HEK293T (cell line): ENCODE measurements at regions of chr10 and their contacts with region 1.

Region 1: DNA sequence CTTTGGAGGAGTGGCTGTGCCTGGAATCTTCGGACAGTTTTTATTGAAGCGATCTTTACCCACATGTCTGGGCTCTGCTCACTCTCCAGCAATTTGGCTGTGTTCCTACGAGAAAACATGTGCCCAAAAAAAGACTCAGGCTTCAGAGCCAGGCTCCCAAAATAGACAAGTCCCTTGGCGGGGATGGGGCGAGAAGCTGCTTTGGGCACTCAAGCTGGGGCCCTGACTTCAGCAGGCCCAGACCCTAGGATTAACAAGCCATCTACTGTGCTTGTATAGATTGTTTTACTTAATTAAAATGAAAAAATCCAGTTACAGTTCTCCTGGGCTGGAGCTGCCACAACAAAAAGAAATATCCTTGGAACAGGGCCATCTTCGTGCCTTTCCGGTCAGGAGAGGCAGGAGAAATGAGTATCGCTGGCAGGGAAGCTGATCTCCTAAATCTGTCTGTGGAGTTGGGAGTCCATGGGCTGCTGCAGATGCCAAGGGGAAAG is 51.4 kb upstream of the PDCD4 start:
- DNase-seq: no peak

Region 2: DNA sequence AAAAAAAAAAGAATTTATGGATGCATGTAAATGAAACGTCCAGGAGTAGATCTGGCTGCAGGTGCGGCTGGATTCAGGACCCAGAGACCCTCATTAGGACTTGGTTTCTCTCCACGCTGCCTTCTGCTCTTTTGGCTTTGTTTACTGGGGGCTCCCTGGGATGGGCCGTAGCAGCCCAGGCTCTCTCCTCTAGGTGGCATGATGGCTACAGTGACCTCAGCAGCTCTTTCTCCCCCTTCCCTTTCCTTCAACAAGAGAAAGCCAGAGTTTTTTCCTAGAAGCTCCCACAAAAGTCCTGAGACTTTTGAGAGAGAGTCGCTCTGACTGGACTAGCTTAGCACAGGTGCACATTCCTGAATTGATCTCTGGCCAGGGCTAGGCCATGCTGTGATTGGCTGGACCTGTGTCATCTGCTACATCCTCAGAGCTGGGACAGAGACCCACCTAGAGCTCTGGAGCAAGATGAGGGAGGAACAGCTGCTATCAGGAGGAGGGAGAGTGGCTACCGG is 16.5 kb before region 1 on chr10:
- CTCF ChIA-PET with region 1: no interaction called
- POLR2A ChIA-PET with region 1: no interaction called
- DNase-seq: peak; percentile 58

Region 3: GRCh38 chr10:110834629-110835301 is 14.4 kb after region 1 on chr10:
- CTCF ChIA-PET with region 1: interaction called, 11 read pairs
- POLR2A ChIA-PET with region 1: interaction called, 4 read pairs
- DNase-seq: peak; percentile 42